ENCODE measurements at regions of chr14 and their contacts with region 1.

Region 1: DNA sequence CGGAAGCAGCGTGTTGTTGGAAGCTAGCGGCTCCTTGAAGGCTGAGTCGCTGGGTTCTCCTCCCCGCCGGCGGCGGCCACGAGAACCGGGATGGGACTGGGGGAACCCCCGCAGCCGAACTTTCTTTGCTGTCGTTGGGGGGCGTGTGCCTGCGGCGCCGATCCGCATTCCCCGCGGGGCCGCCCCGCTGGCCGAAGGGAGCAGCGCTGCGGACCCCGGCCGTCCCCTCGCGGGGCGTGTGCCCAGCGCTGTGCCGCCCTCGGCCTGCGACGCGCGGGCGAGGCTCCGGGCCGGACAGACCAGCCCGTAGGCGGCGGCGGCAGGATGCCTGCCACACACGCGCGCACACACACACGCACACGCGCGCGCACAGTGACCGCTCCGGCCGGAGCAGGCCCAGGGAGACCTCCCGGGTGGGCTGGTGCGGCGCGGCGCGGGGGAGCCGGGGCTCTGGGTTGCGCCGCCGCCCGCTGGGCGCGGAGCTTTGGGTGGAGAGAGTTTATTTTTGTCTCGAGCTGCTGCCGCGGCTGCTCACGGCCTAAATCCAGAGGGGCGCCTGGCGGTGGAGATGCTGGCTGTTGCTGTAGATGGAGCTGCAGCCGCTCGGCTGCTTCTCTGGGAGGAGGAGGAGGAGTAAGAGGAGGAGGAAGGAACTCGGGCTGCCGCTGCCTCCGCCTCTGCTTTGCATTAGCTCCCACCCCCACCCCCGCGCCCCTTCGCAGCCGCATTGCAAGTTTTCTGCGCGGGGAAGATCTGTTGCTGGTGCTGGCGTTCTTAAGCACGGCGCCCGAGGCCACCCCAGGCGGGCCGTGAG is at the start of gene SAMD4A:
- DNase-seq: peak in 1 of 2 donors; percentile 85
- H3K4me3 ChIP-seq: peak within 1 kb of the TSS; percentile 87 to 91
- H3K27ac ChIP-seq: peak within 1 kb of the TSS; percentile 99 to 100
- H3K4me1 ChIP-seq: peaks cover 0 to 19% of the 10 kb centered on the region in 2 donors
- H3K27me3 ChIP-seq: no peaks in the 10 kb centered on the region
- CTCF ChIP-seq: peak; percentile 23 to 34 (median 25)
- total RNA-seq, gene SAMD4A: 66.0 TPM

Region 2: DNA sequence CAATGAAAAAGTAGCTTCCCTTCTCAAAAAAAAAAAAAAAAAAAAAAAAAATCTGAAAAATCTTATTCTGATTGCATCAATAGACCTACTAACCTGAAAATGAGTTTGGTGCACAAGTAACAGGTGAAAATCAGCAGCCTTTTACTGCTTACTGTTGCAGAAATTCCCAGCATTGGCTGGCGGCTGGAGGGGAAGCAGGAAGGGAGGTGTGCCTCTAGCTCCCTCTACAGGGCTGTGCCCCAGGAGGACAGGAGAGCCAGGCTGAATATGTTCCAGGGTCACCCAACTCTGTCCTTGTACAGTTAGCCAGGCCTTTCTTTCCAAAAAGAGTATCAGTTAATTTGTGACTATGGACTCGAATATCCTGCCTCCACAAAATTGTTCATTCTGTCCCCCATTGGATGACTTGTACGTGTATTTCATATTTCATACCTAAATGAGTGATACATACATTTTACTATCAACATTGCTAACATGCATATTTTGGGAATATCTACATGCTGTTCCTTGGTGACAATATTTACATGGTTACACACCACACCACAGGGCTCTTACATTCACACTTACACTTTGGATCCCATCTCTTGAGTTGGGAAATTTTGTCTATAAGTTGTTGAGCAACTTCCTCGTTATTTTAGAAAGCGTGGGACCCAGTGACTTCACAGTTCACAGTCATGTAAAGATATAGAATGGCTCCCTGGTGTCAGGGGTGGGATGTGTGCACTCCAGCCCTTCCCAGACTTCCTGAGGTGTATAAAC is 125.1 kb after region 1 on chr14:
- intact Hi-C with region 1: loop called (anchors 2 kb)
- DNase-seq: peak in 1 of 2 donors; percentile 91
- H3K4me3 ChIP-seq: no peak overlapping the region
- H3K27ac ChIP-seq: peak overlapping the region; percentile 63 to 96
- H3K4me1 ChIP-seq: peaks cover 7 to 57% of the 10 kb centered on the region in 2 donors
- H3K27me3 ChIP-seq: no peaks in the 10 kb centered on the region
- CTCF ChIP-seq: peak; percentile 77 to 88 (median 79)

Region 3: GRCh38 chr14:54773171-54773975 is 206.8 kb after region 1 on chr14:
- intact Hi-C with region 1: loop called (anchors 1 kb)
- DNase-seq: peak; percentile 78 to 98
- H3K4me3 ChIP-seq: peak overlapping the region in 1 of 2 donors; percentile 33
- H3K27ac ChIP-seq: peak overlapping the region; percentile 96 to 97
- H3K4me1 ChIP-seq: peaks cover 27 to 62% of the 10 kb centered on the region in 2 donors
- H3K27me3 ChIP-seq: no peaks in the 10 kb centered on the region
- CTCF ChIP-seq: peak; percentile 70 to 91 (median 72)

Region 4: DNA sequence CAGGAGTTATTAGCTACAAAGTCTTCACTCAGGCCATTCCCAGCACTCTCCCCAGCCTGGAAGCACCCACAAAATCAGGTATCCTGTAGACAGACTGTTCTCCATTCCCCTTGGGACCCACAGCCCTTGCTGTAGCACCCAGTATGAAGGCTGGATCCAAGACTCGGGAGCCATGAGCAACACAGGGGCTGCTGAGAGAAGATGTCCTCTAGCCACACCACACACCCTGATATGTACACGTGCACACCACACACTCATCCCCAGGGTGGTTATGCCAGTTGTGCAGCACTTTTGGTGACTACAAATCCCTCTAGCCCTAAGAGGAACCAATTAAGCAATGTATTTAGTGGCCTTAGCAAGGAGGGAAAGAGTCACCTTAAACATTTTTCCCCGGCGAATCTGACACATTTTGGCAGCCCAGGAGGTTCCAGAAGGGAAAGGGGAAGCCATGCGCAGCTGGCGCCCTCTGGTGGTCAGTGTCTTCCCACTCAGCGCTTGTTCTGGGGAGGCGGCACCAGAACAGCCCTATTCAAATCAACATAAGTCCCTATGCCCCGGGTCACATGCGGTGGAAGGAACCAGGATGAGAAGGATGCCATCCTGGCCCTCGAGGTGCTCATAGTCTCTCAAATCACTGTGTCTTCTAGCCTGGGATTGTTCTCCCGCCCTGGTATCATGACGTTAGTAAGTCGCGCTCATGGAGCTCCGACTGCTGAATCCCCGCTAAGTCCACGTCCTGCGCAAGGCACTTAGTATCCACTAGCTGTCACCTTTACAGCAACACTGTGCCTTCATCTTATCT is 239.1 kb after region 1 on chr14:
- intact Hi-C with region 1: loop called (anchors 1 kb)
- DNase-seq: peak in 1 of 2 donors; percentile 93
- H3K4me3 ChIP-seq: peak overlapping the region; percentile 27 to 42
- H3K27ac ChIP-seq: no peak overlapping the region
- H3K4me1 ChIP-seq: peaks cover 3 to 7% of the 10 kb centered on the region in 2 donors
- H3K27me3 ChIP-seq: no peaks in the 10 kb centered on the region
- CTCF ChIP-seq: peak; percentile 85 to 95 (median 92)

Region 5: DNA sequence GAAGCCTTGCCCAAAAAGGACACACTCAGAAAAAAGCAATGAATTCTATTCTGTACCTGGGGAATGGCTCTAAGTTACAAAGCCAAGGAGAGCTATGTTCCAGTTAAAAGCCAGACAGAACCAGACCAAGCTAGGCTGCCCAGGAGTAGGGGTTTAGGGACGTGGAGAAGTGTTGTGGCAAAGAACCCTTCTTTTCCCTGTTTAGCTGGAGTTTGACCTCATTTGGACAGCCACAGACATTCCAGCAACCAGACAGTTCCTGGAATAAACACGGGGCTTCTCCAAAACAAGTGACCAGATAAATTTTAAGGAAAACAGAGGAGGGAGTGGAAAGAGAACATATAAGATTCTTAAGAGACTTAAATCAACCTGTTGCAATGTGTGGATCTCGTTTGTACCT is 273.7 kb after region 1 on chr14:
- intact Hi-C with region 1: no loop called
- DNase-seq: no peak
- H3K4me3 ChIP-seq: no peak overlapping the region
- H3K27ac ChIP-seq: peak overlapping the region; percentile 53 to 65
- H3K4me1 ChIP-seq: peaks cover 0 to 10% of the 10 kb centered on the region in 2 donors
- H3K27me3 ChIP-seq: no peaks in the 10 kb centered on the region
- CTCF ChIP-seq: no peak

Region 6: DNA sequence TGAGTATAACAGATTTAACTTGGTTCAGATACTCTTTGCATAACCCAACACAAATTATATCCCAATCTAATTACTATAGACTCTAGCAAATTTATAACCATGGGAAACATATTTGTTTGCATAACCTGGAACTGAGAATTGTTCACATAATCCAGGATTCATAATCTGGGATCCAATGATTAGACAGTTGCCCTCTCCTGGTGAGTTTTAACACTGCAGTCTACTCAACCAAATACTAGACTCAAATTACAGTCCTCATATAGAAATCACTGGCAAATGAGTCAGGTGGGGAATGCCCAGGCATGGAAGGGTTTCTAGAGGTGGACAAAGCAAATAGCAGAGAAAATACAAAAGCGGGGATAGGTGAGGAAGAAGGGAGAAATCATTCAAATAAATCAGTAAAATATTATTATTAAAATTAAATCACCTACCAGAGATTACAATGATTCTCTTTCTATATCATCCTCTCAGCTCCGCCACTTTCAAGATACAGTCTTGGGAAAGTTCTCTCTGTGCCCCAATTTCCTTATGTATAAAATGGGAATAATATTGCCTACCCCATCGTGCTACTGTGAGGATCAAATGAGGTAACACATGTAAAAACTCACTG is 326.6 kb after region 1 on chr14:
- intact Hi-C with region 1: loop called (anchors 5 kb)
- DNase-seq: no peak
- H3K4me3 ChIP-seq: no peak overlapping the region
- H3K27ac ChIP-seq: no peak overlapping the region
- H3K4me1 ChIP-seq: no peaks in the 10 kb centered on the region
- H3K27me3 ChIP-seq: no peaks in the 10 kb centered on the region
- CTCF ChIP-seq: peak; percentile 22 to 78 (median 62)

Measured in ascending aorta (tissue), 2 donors.